ENCODE measurements at regions of chr22 and their contacts with region 1.

Region 1: DNA sequence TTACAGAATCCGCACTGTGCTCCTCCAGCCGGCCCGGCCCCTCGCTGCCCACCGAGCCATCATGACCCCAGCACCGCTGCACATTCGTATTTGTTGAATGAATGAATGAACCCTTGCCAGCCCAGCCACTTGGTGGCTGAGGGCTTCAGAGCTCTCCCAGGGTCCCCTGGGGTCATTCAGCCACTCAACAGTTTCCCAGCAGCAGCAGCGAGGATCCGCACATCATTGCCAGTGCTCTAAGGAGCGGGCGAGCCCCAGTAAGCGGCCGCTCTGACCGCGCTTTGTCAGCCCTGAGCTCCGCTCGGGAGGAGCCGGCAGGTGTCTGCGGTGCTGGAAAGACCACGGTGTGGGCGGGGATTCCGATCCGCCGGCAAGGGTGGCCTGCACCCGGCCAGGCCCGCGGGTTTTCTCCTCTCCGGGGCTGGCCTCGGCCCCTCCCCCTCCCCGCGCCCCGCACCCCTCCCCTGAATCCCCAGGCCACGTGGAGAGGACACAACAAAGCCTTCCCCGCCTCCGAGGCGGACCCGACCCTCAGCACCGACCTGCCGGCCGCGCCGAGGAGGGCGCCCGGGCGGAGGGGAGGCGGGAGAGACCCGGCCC is 563 bp downstream of the BID start:
- DNase-seq: peak; percentile 26 to 84 (median 68)
- ATAC-seq: peak; percentile 47
- H3K4me3 ChIP-seq: peak overlapping the region; percentile 65
- H3K4me3 Mint-ChIP-seq: peak overlapping the region; percentile 90
- H3K27ac ChIP-seq: peak overlapping the region; percentile 19 to 36
- H3K27ac Mint-ChIP-seq: peak overlapping the region; percentile 90
- H3K4me1 ChIP-seq: peaks cover 76% of the 10 kb centered on the region
- H3K4me1 Mint-ChIP-seq: peaks cover 78% of the 10 kb centered on the region
- H3K27me3 ChIP-seq: no peaks in the 10 kb centered on the region
- H3K27me3 Mint-ChIP-seq: no peaks in the 10 kb centered on the region
- CTCF ChIP-seq: no peak

Region 2: DNA sequence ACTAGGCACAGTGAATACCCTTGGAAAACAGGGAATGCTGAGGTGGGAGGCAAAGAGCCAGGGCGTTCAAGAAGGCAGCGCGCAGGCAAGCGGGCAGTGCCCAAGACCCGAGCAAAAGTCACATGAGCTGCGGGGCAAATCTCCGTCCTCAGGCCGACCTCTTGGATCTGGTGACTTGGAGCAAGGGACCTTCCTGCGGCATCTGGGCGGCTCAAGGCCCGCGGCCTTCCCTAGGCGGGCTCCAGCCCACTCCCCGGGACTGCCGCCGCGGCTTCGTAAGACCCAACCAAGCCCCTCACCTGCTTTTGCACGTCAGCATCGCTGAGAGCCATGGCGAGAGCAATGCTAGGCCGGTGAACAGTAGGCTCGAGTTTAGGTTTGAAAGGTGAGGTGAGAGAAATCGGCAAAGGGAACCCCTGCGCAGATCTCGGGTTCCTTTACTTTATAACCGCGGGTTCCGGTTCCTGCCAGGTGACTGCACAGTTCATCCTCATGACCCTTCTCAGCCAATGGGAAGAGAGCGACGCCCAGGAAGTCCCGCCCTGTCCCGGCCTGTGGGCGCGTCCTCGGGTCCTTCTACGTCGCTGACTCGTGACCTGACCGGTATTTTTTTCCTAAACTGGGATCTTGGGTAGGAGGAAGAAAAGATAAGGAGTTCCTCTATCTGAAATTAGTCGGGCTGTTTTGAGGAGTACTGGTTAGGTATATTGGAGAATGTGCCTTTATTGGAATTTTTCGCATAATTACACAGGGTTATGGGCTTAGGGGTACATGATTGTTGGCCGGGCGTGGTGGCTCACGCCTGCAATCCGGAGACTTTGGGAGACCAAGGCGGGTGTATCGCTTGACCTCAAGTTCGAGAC is 145.2 kb before region 1 on chr22 and contains the start of gene ATP6V1E1:
- CTCF ChIA-PET with region 1: no interaction called
- POLR2A ChIA-PET with region 1: no interaction called
- intact Hi-C with region 1: loop called in 1 of 2 experiments (anchors 5 kb)
- DNase-seq: peak; percentile 90 to 97 (median 94)
- ATAC-seq: peak; percentile 100
- H3K4me3 ChIP-seq: peak within 1 kb of the TSS; percentile 84 to 100
- H3K4me3 Mint-ChIP-seq: peak within 1 kb of the TSS; percentile 97
- H3K27ac ChIP-seq: peak within 1 kb of the TSS; percentile 93 to 94
- H3K27ac Mint-ChIP-seq: peak within 1 kb of the TSS; percentile 99
- H3K4me1 ChIP-seq: peaks cover 23% of the 10 kb centered on the region
- H3K4me1 Mint-ChIP-seq: peaks cover 33% of the 10 kb centered on the region
- H3K27me3 ChIP-seq: no peaks in the 10 kb centered on the region
- H3K27me3 Mint-ChIP-seq: no peaks in the 10 kb centered on the region
- CTCF ChIP-seq: no peak
- total RNA-seq, gene ATP6V1E1: 49.8 to 53.0 TPM

Region 3: GRCh38 chr22:17742527-17742902 is 31.2 kb before region 1 on chr22:
- CTCF ChIA-PET with region 1: interaction called, 40 read pairs
- POLR2A ChIA-PET with region 1: interaction called, 4 read pairs
- intact Hi-C with region 1: loop called in 1 of 2 experiments (anchors 2 kb)
- DNase-seq: peak; percentile 44 to 83 (median 67)
- ATAC-seq: peak; percentile 85
- H3K4me3 ChIP-seq: no peak overlapping the region
- H3K4me3 Mint-ChIP-seq: no peak overlapping the region
- H3K27ac ChIP-seq: no peak overlapping the region
- H3K27ac Mint-ChIP-seq: no peak overlapping the region
- H3K4me1 ChIP-seq: no peaks in the 10 kb centered on the region
- H3K4me1 Mint-ChIP-seq: peaks cover 7% of the 10 kb centered on the region
- H3K27me3 ChIP-seq: no peaks in the 10 kb centered on the region
- H3K27me3 Mint-ChIP-seq: no peaks in the 10 kb centered on the region
- CTCF ChIP-seq: peak; percentile 79

Region 4: GRCh38 chr22:17797721-17798559 is 24.2 kb after region 1 on chr22:
- CTCF ChIA-PET with region 1: interaction called, 4 read pairs
- POLR2A ChIA-PET with region 1: no interaction called
- intact Hi-C with region 1: loop called in 1 of 2 experiments (anchors 1 kb)
- DNase-seq: peak in 1 of 9 experiments; percentile 34
- ATAC-seq: no peak
- H3K4me3 ChIP-seq: no peak overlapping the region
- H3K4me3 Mint-ChIP-seq: no peak overlapping the region
- H3K27ac ChIP-seq: no peak overlapping the region
- H3K27ac Mint-ChIP-seq: no peak overlapping the region
- H3K4me1 ChIP-seq: no peaks in the 10 kb centered on the region
- H3K4me1 Mint-ChIP-seq: no peaks in the 10 kb centered on the region
- H3K27me3 ChIP-seq: no peaks in the 10 kb centered on the region
- H3K27me3 Mint-ChIP-seq: no peaks in the 10 kb centered on the region
- CTCF ChIP-seq: no peak

Measured in CD8-positive, alpha-beta T cell (primary cell).